Kidney (tissue), 22 donors: ENCODE measurements at regions of chr7 and their contacts with region 1.

Region 1: DNA sequence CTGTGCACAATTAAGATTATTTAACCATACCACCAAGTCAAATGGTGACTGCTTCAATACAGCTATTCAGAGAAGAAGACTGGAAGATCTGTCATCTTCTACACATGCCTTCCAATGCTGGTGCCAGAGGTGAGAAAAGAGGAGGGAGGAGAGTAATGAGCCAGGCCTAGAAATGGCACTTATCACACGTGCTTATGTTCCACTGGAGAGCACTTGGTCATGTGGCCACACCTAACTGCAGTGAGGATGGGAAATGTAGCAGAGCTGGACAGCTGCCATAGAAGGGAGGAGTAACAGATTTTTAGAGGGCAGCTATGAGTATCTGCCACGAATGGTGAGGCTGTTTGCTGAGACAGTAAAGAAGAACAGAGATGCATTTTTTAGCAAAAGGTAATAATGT is 77.1 kb downstream of the MPLKIP start:
- DNase-seq: peak in 1 of 5 donors; percentile 3
- H3K4me3 ChIP-seq: no peak overlapping the region
- H3K27ac ChIP-seq: no peak overlapping the region
- H3K4me1 ChIP-seq: peaks cover 0 to 2% (median 0%) of the 10 kb centered on the region in 3 donors
- H3K27me3 ChIP-seq: no peaks in the 10 kb centered on the region
- CTCF ChIP-seq: no peak

Region 2: GRCh38 chr7:39894904-39895303 is 162.4 kb before region 1 on chr7:
- intact Hi-C with region 1: loop called (anchors 5 kb)
- DNase-seq: no peak
- H3K4me3 ChIP-seq: no peak overlapping the region
- H3K27ac ChIP-seq: no peak overlapping the region
- H3K4me1 ChIP-seq: no peaks in the 10 kb centered on the region
- H3K27me3 ChIP-seq: no peaks in the 10 kb centered on the region
- CTCF ChIP-seq: no peak

Region 3: GRCh38 chr7:40263752-40264390 is 206.6 kb after region 1 on chr7:
- intact Hi-C with region 1: no loop called
- DNase-seq: no peak
- H3K4me3 ChIP-seq: no peak overlapping the region
- H3K27ac ChIP-seq: no peak overlapping the region
- H3K4me1 ChIP-seq: no peaks in the 10 kb centered on the region
- H3K27me3 ChIP-seq: no peaks in the 10 kb centered on the region
- CTCF ChIP-seq: no peak

Region 4: GRCh38 chr7:40437498-40437897 is 380.2 kb after region 1 on chr7:
- intact Hi-C with region 1: no loop called
- DNase-seq: no peak
- H3K4me3 ChIP-seq: no peak overlapping the region
- H3K27ac ChIP-seq: no peak overlapping the region
- H3K4me1 ChIP-seq: no peaks in the 10 kb centered on the region
- H3K27me3 ChIP-seq: no peaks in the 10 kb centered on the region
- CTCF ChIP-seq: no peak